Activated CD4-positive, alpha-beta T cell treated with anti-CD3 and anti-CD28 coated beads for 36 hours (primary cell): ENCODE measurements at regions of chr11 and their contacts with region 1.

Region 1: GRCh38 chr11:95089620-95090542 is at the start of gene ENDOD1:
- DNase-seq: peak; percentile 91
- ATAC-seq: peak; percentile 91
- H3K4me3 Mint-ChIP-seq: peak within 1 kb of the TSS; percentile 84
- H3K27ac Mint-ChIP-seq: peak within 1 kb of the TSS; percentile 96
- H3K4me1 Mint-ChIP-seq: peaks cover 61% of the 10 kb centered on the region
- H3K27me3 Mint-ChIP-seq: no peaks in the 10 kb centered on the region
- total RNA-seq, gene ENDOD1: 11.1 to 13.1 TPM

Region 2: DNA sequence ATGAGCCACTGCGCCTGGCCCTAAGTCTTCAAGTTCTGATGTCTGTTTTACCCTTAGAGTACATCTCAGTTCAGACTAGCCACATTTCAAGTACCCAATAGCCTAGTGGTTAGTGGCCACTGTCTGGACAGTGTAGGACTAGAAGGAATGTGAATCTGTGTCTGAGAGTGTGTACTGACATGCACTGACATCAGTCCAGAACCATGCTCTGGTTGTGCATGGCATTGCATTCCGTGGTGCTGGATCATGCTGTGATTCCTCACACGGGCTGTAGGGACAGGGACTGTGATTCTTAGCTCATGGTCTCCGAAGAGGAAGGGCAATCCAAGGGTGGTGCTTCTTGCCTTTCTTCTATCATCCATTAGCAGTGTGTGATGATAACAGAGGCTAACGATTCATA is 280.6 kb before region 1 on chr11:
- CTCF ChIA-PET with region 1: no interaction called
- POLR2A ChIA-PET with region 1: no interaction called
- intact Hi-C with region 1: no loop called
- DNase-seq: no peak
- ATAC-seq: no peak
- H3K4me3 Mint-ChIP-seq: no peak overlapping the region
- H3K27ac Mint-ChIP-seq: no peak overlapping the region
- H3K4me1 Mint-ChIP-seq: no peaks in the 10 kb centered on the region
- H3K27me3 Mint-ChIP-seq: peaks cover 3% of the 10 kb centered on the region

Region 3: GRCh38 chr11:94973099-94973968 is 116.5 kb before region 1 on chr11 and contains the starts of genes CWC15 and KDM4D:
- CTCF ChIA-PET with region 1: no interaction called
- POLR2A ChIA-PET with region 1: no interaction called
- intact Hi-C with region 1: loop called (anchors 1 kb)
- DNase-seq: peak; percentile 97
- ATAC-seq: peak; percentile 99
- H3K4me3 Mint-ChIP-seq: peak within 1 kb of the TSS; percentile 84
- H3K27ac Mint-ChIP-seq: peak within 1 kb of the TSS; percentile 94
- H3K4me1 Mint-ChIP-seq: peaks cover 27% of the 10 kb centered on the region
- H3K27me3 Mint-ChIP-seq: no peaks in the 10 kb centered on the region
- total RNA-seq, gene CWC15: 74.7 to 85.0 TPM
- total RNA-seq, gene KDM4D: 1.5 to 1.8 TPM